ENCODE measurements at regions of chr3 and their contacts with region 1.

Region 1: GRCh38 chr3:15291589-15292541 is 40.5 kb downstream of the SH3BP5 start:
- DNase-seq: peak; percentile 79

Region 2: GRCh38 chr3:15325242-15325641 is 33.4 kb after region 1 on chr3:
- intact Hi-C with region 1: loop called (anchors 1 to 2 kb)
- DNase-seq: no peak